ENCODE measurements at regions of chr2 and their contacts with region 1.

Region 1: GRCh38 chr2:229431327-229431954 is 160.4 kb upstream of the PID1 start:
- DNase-seq: no peak
- H3K4me3 ChIP-seq: no peak overlapping the region
- H3K27me3 ChIP-seq: no peaks in the 10 kb centered on the region
- CTCF ChIP-seq: peak; percentile 61

Region 2: DNA sequence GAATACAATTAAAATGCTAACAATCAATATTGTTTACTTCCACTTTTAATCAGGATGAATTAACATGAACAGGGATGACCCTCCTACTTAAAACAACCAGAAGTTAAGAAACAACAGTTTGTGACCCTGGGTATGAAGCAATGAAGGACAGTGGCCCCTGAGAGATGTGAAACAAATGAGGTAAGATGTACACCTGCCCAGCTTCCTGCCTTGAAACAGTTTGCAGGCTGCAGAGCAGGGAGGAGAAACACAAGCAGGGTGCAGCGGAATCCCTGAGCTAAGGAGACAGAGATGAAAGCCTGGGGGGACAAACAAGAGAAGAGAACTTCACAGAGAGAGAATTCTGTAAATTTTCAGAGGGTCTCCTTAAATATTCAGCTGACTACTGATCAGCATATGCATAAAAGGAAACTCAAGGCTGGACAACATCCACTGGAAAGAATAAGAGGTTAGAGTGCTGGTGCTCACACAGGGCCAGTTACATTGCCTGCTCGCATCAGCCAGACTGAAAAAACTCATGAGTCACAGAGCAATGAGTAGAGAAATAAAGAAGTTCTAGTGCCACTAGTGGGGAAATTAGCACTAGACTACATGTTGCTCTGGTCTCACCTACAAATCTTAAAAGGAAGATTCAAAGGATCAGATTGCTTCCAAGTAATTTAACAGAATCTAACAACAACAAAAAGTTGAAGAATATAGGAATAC is 266.7 kb before region 1 on chr2:
- CTCF ChIA-PET with region 1: no interaction called
- POLR2A ChIA-PET with region 1: no interaction called
- DNase-seq: no peak
- H3K4me3 ChIP-seq: no peak overlapping the region
- H3K27me3 ChIP-seq: no peaks in the 10 kb centered on the region
- CTCF ChIP-seq: no peak

Region 3: DNA sequence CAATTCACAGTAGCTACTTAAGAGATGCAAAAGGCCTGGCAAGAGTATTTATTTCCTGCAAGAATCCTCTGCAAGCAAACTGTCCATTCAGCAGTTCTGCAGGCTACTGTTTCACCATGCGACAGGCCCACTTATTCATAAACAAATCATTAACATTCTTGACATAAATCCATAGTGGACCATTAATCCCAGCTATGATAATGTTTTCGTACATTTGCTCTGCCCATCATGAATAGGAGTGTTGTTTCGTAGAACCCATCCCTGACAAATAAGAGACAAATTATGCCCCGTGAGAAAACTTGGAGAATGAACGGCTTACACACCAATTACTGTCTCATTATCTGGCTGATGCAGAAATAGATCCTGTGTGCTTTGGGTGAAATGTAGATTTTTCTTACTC is 225.7 kb before region 1 on chr2:
- CTCF ChIA-PET with region 1: no interaction called
- POLR2A ChIA-PET with region 1: interaction called, 10 read pairs
- DNase-seq: no peak
- H3K4me3 ChIP-seq: no peak overlapping the region
- H3K27me3 ChIP-seq: no peaks in the 10 kb centered on the region
- CTCF ChIP-seq: no peak

Region 4: GRCh38 chr2:229392196-229392595 is 39.2 kb before region 1 on chr2:
- CTCF ChIA-PET with region 1: no interaction called
- POLR2A ChIA-PET with region 1: no interaction called
- DNase-seq: no peak
- H3K4me3 ChIP-seq: no peak overlapping the region
- H3K27me3 ChIP-seq: no peaks in the 10 kb centered on the region
- CTCF ChIP-seq: no peak

Region 5: DNA sequence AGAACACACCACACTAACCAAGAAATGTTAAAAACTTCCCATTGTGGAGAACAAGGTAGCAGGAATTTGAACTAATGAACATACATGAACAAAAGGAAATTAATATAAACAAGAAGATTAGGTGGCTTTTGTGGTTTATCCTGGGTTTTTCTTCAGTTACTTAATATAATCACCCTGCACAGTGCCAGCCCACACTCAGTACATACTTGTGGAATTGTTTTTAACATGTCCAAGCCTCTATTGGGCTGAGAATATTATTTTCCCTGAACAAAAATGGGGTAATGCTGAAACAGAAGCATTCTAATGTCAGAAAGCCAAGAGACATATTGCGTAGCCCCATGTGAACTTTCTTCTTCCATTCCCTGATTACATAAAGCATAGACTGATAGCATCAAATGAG is 80.1 kb after region 1 on chr2:
- CTCF ChIA-PET with region 1: no interaction called
- POLR2A ChIA-PET with region 1: interaction called, 15 read pairs
- DNase-seq: no peak
- H3K4me3 ChIP-seq: no peak overlapping the region
- H3K27me3 ChIP-seq: no peaks in the 10 kb centered on the region
- CTCF ChIP-seq: no peak

Measured in BJ (cell line).